ENCODE measurements at regions of chr17 and their contacts with region 1.

Region 1: DNA sequence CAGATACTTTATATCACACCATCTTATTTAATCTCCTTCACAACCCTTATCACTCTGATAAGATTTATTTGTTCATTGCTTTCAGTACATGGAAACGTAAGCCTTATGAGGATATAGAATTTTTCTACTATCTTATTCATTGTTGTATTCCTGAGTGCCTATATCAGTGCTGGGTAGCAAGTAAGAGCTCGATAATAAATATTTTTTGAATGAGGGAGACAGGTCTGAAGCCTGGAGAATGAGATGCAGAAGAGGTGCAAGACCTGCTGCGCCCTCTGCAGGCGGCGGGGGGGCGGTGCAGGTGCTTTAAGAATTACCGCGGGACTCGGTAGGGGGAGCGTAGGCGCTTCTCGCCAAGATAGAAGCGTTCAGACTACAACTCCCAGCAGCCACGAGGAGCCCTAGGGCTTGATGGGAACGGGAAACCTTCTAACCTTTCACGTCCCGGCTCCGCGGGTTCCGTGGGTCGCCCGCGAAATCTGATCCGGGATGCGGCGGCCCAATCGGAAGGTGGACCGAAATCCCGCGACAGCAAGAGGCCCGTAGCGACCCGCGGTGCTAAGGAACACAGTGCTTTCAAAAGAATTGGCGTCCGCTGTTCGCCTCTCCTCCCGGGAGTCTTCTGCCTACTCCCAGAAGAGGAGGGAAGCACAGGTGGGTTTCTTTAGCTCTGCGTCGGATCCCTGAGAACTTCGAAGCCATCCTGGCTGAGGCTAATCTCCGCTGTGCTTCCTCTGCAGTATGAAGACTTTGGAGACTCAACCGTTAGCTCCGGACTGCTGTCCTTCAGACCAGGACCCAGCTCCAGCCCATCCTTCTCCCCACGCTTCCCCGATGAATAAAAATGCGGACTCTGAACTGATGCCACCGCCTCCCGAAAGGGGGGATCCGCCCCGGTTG is at the start of gene WRAP53:
- DNase-seq: peak; percentile 93 to 97 (median 96)
- ATAC-seq: peak; percentile 89
- H3K4me3 ChIP-seq: peak within 1 kb of the TSS; percentile 96
- H3K4me3 Mint-ChIP-seq: peak within 1 kb of the TSS; percentile 95 to 99 (median 97)
- H3K27ac ChIP-seq: peak within 1 kb of the TSS; percentile 96
- H3K27ac Mint-ChIP-seq: peak within 1 kb of the TSS; percentile 99 to 100 (median 100)
- H3K4me1 ChIP-seq: peaks cover 28 to 31% of the 10 kb centered on the region in 2 donors
- H3K4me1 Mint-ChIP-seq: peaks cover 31 to 47% (median 41%) of the 10 kb centered on the region in 7 donors
- H3K27me3 ChIP-seq: no peaks in the 10 kb centered on the region
- H3K27me3 Mint-ChIP-seq: no peaks in the 10 kb centered on the region
- total RNA-seq, gene WRAP53: 6.7 to 21.1 (median 9.6) TPM

Region 2: DNA sequence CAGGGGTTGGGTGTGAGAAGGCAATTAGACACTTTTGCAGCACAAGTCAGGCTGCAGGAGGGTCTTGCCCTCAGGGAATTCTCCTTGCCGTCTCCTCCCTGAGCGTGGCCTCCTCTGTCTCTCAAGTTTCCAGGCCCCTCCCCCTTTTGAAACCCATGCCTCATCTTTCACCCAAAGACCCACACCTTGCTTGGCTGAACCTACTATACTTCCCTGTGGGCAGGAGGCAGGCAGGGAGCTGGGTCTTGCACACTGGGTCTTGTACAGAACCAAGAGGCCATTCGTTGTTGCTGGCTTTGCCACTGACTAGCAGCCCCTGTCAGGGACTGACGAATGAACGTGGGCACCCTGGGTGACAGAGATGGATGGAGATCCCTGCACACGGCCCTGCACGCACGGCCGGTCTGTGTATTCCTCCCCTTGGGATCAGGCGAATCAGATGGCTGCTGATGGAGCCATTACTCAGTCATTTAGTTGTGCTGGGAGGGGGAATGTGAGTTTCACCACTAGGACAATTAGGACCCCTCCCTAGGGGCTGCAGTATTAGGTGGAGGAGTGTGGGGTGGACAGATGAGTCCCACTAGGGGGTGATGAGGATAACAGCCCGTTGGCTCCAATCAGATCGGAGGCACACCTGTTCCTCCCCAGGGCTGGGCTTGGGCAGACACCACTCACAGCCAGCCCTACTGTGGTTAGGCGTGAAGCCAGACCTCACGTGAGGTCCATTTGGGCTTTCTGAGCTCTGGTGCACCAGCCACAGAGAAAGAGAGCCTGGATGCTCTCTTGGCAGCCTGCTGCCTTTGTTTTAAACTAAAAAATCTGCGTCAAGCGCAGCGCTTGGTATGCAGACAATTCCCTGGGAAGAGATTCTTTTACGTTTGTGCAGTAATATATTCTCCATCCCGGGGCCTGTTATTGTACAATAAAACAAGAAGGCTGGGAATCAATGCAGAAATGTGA is 1785.7 kb before region 1 on chr17:
- CTCF ChIA-PET with region 1: no interaction called
- POLR2A ChIA-PET with region 1: no interaction called
- intact Hi-C with region 1: no loop called
- DNase-seq: no peak
- ATAC-seq: no peak
- H3K4me3 ChIP-seq: no peak overlapping the region
- H3K4me3 Mint-ChIP-seq: no peak overlapping the region
- H3K27ac ChIP-seq: no peak overlapping the region
- H3K27ac Mint-ChIP-seq: no peak overlapping the region
- H3K4me1 ChIP-seq: no peaks in the 10 kb centered on the region
- H3K4me1 Mint-ChIP-seq: peaks cover 0 to 6% (median under 1%) of the 10 kb centered on the region in 7 donors
- H3K27me3 ChIP-seq: no peaks in the 10 kb centered on the region
- H3K27me3 Mint-ChIP-seq: peaks cover 0 to 17% (median 14%) of the 10 kb centered on the region in 5 donors

Region 3: DNA sequence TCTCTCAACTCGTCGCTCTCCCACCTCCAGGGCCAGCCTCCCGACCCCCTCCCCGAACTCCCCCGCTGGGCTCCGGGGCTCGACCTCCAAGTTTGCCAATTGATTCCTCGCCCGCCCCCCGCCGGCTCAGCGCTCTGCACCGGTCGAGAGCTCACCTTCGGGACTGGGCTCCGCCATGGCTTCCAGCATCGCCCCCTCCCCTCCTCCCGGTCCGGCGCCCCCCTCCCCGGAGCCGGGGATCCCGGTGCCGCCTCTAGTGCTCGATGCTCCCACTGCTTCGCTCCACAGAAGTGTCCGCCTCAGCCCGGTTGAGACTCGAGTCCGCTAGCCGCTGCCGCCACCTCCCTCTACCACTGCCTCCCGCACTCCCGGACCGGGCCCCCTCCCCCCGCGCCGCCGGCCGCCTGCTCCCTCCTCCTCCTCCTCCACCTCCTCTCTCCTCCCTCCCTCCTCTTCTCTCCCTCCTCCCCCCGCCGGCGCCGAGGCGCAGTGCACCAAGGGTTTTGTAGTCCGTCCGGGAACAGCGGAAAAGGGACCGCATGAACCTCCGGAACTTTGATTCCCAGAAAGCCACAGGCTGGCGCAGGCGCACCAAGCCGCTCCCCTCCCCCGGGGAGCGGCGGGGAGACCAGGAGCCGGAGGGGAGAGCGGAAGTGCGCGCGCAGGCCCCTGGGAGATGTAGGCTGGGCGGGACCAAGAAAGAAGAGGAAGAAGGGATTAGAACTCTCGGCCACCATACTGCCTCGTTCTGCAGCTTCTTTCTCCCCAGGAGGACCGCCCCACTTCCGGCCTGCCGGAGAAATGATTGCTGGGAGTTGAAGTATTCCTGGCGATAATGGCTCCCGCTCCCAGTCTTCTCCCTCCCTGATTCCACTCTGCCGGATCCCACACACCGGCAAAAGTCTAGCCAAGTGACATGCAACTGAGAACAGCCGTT is 448.8 kb before region 1 on chr17 and contains the start of gene PHF23:
- CTCF ChIA-PET with region 1: no interaction called
- POLR2A ChIA-PET with region 1: interaction called, 15 read pairs
- intact Hi-C with region 1: loop called (anchors 2 to 5 kb)
- DNase-seq: peak; percentile 91 to 98 (median 97)
- ATAC-seq: peak; percentile 78
- H3K4me3 ChIP-seq: peak within 1 kb of the TSS; percentile 76
- H3K4me3 Mint-ChIP-seq: peak within 1 kb of the TSS; percentile 88 to 98 (median 95)
- H3K27ac ChIP-seq: peak within 1 kb of the TSS; percentile 92
- H3K27ac Mint-ChIP-seq: peak within 1 kb of the TSS; percentile 55 to 100 (median 95)
- H3K4me1 ChIP-seq: peaks cover 32 to 44% of the 10 kb centered on the region in 2 donors
- H3K4me1 Mint-ChIP-seq: peaks cover 38 to 67% (median 60%) of the 10 kb centered on the region in 7 donors
- H3K27me3 ChIP-seq: no peaks in the 10 kb centered on the region
- H3K27me3 Mint-ChIP-seq: peaks cover 0 to 7% (median 0%) of the 10 kb centered on the region in 5 donors
- total RNA-seq, gene PHF23: 12.3 to 58.7 (median 55.2) TPM

Region 4: DNA sequence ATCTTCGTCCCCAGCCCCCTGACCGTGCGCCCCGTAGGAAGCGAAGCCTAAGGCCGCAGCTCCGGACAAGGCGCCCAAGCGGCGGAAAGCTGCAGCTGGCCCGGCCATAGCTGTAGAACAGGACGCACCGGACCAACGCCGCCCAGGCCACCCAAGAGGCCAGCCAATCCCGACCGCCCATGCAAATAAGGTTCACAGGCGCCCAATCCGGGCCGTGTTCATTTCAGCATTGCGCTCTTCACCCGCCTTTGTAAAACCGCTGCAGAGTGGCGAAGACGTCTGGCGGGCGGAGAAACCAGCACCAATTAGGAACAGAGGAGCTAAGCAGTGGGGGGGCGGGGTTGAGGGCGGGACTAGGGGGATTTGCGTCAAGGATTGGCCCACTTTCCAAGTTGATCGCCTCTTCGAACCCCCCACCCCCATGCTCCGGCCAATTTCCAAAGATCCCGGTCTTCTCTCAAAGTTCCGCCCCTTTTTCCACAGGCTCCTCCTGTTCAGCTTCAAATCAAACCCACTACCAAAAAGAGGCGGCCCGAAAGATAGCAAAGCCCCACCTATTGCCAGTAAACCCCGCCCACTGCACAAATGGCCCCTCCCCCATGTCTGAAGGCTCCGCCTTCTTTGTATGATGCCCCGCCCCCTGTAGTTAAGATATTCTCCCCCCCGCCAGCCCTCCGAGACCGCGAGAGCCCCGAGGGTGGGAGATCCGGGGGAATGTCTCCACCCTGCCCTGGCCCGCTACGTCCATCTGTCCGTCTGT is 284.0 kb before region 1 on chr17 and contains the start of gene TMEM256:
- CTCF ChIA-PET with region 1: no interaction called
- POLR2A ChIA-PET with region 1: interaction called, 13 read pairs
- intact Hi-C with region 1: loop called (anchors 1 to 2 kb)
- DNase-seq: peak; percentile 79 to 96 (median 91)
- ATAC-seq: peak; percentile 93
- H3K4me3 ChIP-seq: peak within 1 kb of the TSS; percentile 95
- H3K4me3 Mint-ChIP-seq: peak within 1 kb of the TSS; percentile 87 to 98 (median 96)
- H3K27ac ChIP-seq: peak within 1 kb of the TSS; percentile 78
- H3K27ac Mint-ChIP-seq: peak within 1 kb of the TSS; percentile 91 to 100 (median 96)
- H3K4me1 ChIP-seq: peaks cover 9 to 10% of the 10 kb centered on the region in 2 donors
- H3K4me1 Mint-ChIP-seq: peaks cover 8 to 25% (median 21%) of the 10 kb centered on the region in 7 donors
- H3K27me3 ChIP-seq: no peaks in the 10 kb centered on the region
- H3K27me3 Mint-ChIP-seq: peaks cover 0 to 23% (median 0%) of the 10 kb centered on the region in 5 donors
- total RNA-seq, gene TMEM256: 31.5 to 58.5 (median 48.2) TPM

Region 5: GRCh38 chr17:7572588-7573323 is 115.4 kb before region 1 on chr17:
- CTCF ChIA-PET with region 1: interaction called, 4 read pairs
- POLR2A ChIA-PET with region 1: interaction called, 70 read pairs
- intact Hi-C with region 1: loop called (anchors 1 kb)
- DNase-seq: peak; percentile 99 to 100 (median 100)
- ATAC-seq: peak; percentile 91
- H3K4me3 ChIP-seq: peak overlapping the region; percentile 91
- H3K4me3 Mint-ChIP-seq: peak overlapping the region; percentile 90 to 100 (median 98)
- H3K27ac ChIP-seq: peak overlapping the region; percentile 96
- H3K27ac Mint-ChIP-seq: peak overlapping the region; percentile 94 to 99 (median 98)
- H3K4me1 ChIP-seq: peaks cover 21 to 31% of the 10 kb centered on the region in 2 donors
- H3K4me1 Mint-ChIP-seq: peaks cover 9 to 62% (median 48%) of the 10 kb centered on the region in 7 donors
- H3K27me3 ChIP-seq: no peaks in the 10 kb centered on the region
- H3K27me3 Mint-ChIP-seq: peaks cover 0 to 5% (median 0%) of the 10 kb centered on the region in 5 donors

Region 6: DNA sequence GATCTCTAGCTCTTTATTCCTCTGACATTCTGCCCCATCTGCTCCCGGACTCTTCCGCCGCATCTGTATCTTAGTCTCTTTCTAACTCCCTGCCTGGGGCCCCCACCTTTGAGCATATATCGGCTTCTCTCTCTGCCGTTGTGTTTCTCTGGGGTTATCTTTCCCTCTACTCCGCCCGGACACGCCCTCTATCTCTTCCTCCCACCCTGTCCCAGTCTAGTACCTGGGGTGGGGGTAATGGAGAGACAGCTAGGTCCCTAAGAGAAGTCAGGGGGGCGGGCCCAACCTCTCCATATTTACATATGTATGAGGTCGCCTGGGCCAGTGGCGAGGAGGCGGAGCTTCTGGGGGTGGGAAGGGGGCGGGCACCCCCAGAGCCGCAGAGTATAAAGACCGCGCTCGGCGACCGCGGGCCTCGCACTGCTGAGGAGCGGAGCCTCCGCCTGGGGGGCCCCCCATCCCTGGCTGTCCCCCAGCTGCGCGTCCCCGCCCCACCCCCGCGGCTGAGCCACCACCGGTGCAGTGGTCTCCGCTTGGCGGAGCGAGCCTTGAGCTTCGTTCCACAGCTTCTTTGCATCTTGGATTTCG is 37.6 kb before region 1 on chr17 and contains the start of gene ATP1B2:
- CTCF ChIA-PET with region 1: interaction called, 11 read pairs
- POLR2A ChIA-PET with region 1: interaction called, 55 read pairs
- intact Hi-C with region 1: loop called (anchors 2 kb)
- DNase-seq: peak; percentile 44 to 89 (median 66)
- ATAC-seq: peak; percentile 95
- H3K4me3 ChIP-seq: peak within 1 kb of the TSS; percentile 60
- H3K4me3 Mint-ChIP-seq: peak within 1 kb of the TSS; percentile 84 to 94 (median 90)
- H3K27ac ChIP-seq: no peak within 1 kb of the TSS
- H3K27ac Mint-ChIP-seq: peak within 1 kb of the TSS in 5 of 9 donors; percentile 7 to 70 (median 59)
- H3K4me1 ChIP-seq: peaks cover 11 to 21% of the 10 kb centered on the region in 2 donors
- H3K4me1 Mint-ChIP-seq: peaks cover 10 to 21% (median 15%) of the 10 kb centered on the region in 7 donors
- H3K27me3 ChIP-seq: peaks cover 0 to 15% of the 10 kb centered on the region in 2 donors
- H3K27me3 Mint-ChIP-seq: peaks cover 28 to 70% (median 39%) of the 10 kb centered on the region in 5 donors
- total RNA-seq, gene ATP1B2: 0.12 to 1.1 (median 0.29) TPM

Region 7: DNA sequence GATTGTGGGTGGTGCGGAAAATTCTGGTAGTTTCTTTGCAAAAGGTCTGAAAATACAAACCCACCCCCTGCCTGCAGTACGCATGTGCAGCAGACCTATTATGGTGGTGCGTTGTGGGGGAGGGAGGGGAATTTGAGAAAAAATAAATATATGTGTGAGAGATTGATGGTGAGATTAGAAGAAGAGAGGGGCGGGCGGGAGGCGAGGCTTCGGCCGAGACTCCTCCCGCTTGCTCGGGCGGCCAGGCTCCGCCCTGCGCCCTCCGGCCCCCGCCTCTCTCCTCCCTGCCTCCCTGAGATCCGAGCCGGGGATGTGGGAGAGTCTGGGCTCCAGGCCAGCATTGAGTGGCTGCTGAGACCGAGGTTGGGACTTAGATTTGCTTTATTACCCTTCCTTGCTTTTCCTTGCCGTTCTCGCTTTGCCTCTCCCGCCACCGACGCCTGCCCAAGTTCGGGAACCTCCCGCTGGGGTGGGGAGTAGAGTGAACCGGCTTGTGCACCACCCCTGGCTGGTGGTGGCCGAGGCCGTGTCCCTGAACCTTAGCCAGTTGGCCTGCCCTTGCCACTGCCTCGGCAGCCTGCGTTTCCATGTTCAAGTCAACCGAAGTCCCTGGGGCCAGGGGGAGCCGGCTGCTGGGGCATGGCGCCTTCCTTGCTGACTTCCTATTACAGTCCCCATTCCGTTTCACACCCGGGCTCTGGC is 199.5 kb after region 1 on chr17:
- CTCF ChIA-PET with region 1: no interaction called
- POLR2A ChIA-PET with region 1: no interaction called
- intact Hi-C with region 1: loop called (anchors 1 kb)
- DNase-seq: peak; percentile 41 to 96 (median 93)
- ATAC-seq: peak; percentile 83
- H3K4me3 ChIP-seq: peak overlapping the region; percentile 61
- H3K4me3 Mint-ChIP-seq: no peak overlapping the region
- H3K27ac ChIP-seq: peak overlapping the region; percentile 91
- H3K27ac Mint-ChIP-seq: no peak overlapping the region
- H3K4me1 ChIP-seq: peaks cover 28 to 29% of the 10 kb centered on the region in 2 donors
- H3K4me1 Mint-ChIP-seq: peaks cover 0 to 17% (median 8%) of the 10 kb centered on the region in 7 donors
- H3K27me3 ChIP-seq: no peaks in the 10 kb centered on the region
- H3K27me3 Mint-ChIP-seq: no peaks in the 10 kb centered on the region

Region 8: GRCh38 chr17:8383143-8383822 is 695.1 kb after region 1 on chr17 and contains the start of gene RPL26:
- CTCF ChIA-PET with region 1: no interaction called
- POLR2A ChIA-PET with region 1: no interaction called
- intact Hi-C with region 1: loop called in 1 of 2 experiments (anchors 5 kb)
- DNase-seq: peak; percentile 89 to 97 (median 97)
- ATAC-seq: peak; percentile 94
- H3K4me3 ChIP-seq: peak within 1 kb of the TSS; percentile 83
- H3K4me3 Mint-ChIP-seq: peak within 1 kb of the TSS; percentile 93 to 99 (median 97)
- H3K27ac ChIP-seq: peak within 1 kb of the TSS; percentile 82
- H3K27ac Mint-ChIP-seq: peak within 1 kb of the TSS; percentile 93 to 98 (median 96)
- H3K4me1 ChIP-seq: peaks cover 28 to 40% of the 10 kb centered on the region in 2 donors
- H3K4me1 Mint-ChIP-seq: peaks cover 34 to 76% (median 60%) of the 10 kb centered on the region in 7 donors
- H3K27me3 ChIP-seq: no peaks in the 10 kb centered on the region
- H3K27me3 Mint-ChIP-seq: peaks cover 0 to 2% (median 0%) of the 10 kb centered on the region in 5 donors
- total RNA-seq, gene RPL26: 2,029 to 3,298 (median 3,039) TPM